ENCODE measurements at regions of chr1 and their contacts with region 1.

Region 1: DNA sequence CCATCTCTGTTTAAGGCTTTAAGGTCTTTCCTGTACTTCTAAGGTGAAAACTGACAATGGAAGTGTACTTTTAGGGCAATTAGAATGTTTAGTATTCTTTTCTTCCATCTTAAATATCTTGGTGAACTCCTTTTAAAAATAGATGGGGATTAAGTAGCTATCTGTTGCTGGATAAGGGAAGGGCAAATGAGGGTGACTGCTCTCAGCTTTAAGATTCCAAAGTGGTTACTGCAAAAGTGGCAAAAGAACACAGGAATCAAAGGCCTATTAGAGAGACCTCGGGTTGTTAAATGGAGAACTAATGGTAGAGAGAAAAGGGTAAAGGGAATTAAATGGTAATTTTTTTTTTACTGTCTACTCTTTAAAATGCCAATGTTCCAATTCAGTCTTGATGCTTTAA is 774.1 kb upstream of the B3GALT2 start:
- DNase-seq: no peak
- H3K4me3 Mint-ChIP-seq: no peak overlapping the region
- H3K27ac Mint-ChIP-seq: no peak overlapping the region
- H3K4me1 Mint-ChIP-seq: peaks cover 8% of the 10 kb centered on the region
- H3K27me3 Mint-ChIP-seq: no peaks in the 10 kb centered on the region
- CTCF ChIP-seq: no peak

Region 2: GRCh38 chr1:193929374-193930033 is 31.0 kb before region 1 on chr1:
- CTCF ChIA-PET with region 1: no interaction called
- intact Hi-C with region 1: loop called (anchors 2 kb)
- DNase-seq: no peak
- H3K4me3 Mint-ChIP-seq: no peak overlapping the region
- H3K27ac Mint-ChIP-seq: no peak overlapping the region
- H3K4me1 Mint-ChIP-seq: no peaks in the 10 kb centered on the region
- H3K27me3 Mint-ChIP-seq: no peaks in the 10 kb centered on the region
- CTCF ChIP-seq: no peak

Region 3: GRCh38 chr1:194004146-194004545 is 43.6 kb after region 1 on chr1:
- CTCF ChIA-PET with region 1: no interaction called
- intact Hi-C with region 1: no loop called
- DNase-seq: no peak
- H3K4me3 Mint-ChIP-seq: no peak overlapping the region
- H3K27ac Mint-ChIP-seq: no peak overlapping the region
- H3K4me1 Mint-ChIP-seq: no peaks in the 10 kb centered on the region
- H3K27me3 Mint-ChIP-seq: no peaks in the 10 kb centered on the region
- CTCF ChIP-seq: no peak